Activated CD4-positive, alpha-beta memory T cell treated with anti-CD3 and anti-CD28 coated beads for 36 hours (primary cell): ENCODE measurements at regions of chr16 and their contacts with region 1.

Region 1: DNA sequence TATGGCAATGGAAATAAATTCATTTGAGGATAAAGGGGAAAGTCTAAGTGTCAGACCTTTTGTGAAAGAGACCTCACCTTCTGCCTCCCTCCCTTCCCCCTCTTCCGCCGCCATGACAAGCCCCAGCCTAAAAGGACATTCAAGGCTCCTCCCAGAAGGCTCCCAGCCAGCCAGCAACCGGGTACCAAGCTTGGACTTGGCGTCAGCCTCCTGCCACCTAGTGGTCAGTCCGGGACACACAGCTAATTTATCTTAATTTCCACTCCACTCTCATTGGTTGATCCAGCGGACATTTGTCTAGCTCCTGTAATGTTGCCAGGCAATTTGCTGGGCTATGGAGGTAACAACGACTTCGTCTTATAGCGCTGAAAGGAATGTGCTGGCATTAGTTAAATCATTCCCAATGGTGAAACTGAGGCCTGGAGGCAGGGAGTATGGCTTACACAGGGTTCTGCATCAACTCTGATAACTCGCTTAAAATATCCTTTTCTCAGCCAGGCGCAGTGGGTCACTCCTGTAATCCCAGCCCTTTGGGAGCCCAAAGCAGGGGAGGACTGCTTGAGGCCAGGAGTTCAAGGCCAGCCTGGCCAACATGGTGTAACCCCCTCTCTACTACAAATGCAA is 19.3 kb upstream of the CLEC3A start:
- DNase-seq: peak; percentile 87
- H3K4me3 Mint-ChIP-seq: no peak overlapping the region
- H3K27ac Mint-ChIP-seq: no peak overlapping the region
- H3K4me1 Mint-ChIP-seq: peaks cover 2% of the 10 kb centered on the region
- H3K27me3 Mint-ChIP-seq: peaks cover 11% of the 10 kb centered on the region

Region 2: DNA sequence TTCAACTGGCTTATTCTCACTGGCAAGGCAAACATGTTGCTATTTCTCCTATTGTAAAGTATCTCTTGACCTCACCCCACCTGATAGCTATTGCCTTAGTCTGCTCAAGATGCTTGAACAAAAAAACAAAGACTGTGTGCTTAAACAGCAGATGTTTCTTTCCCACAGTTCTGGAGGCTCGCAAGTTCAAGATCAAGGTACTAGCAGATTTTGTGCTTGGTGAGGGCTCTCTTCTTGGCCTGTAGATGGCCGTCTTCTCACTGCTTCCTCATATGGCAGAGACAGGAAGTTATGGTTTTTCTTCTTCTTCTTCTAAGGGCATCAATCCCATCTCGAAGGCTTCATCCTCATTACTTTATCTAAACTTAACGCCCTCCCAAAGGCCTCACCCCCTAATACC is 90.4 kb before region 1 on chr16:
- CTCF ChIA-PET with region 1: no interaction called
- POLR2A ChIA-PET with region 1: no interaction called
- intact Hi-C with region 1: no loop called
- DNase-seq: no peak
- H3K4me3 Mint-ChIP-seq: no peak overlapping the region
- H3K27ac Mint-ChIP-seq: no peak overlapping the region
- H3K4me1 Mint-ChIP-seq: no peaks in the 10 kb centered on the region
- H3K27me3 Mint-ChIP-seq: no peaks in the 10 kb centered on the region

Region 3: GRCh38 chr16:77951775-77952174 is 51.3 kb before region 1 on chr16:
- CTCF ChIA-PET with region 1: interaction called, 5 read pairs
- POLR2A ChIA-PET with region 1: no interaction called
- intact Hi-C with region 1: loop called (anchors 1 kb)
- DNase-seq: no peak
- H3K4me3 Mint-ChIP-seq: no peak overlapping the region
- H3K27ac Mint-ChIP-seq: no peak overlapping the region
- H3K4me1 Mint-ChIP-seq: no peaks in the 10 kb centered on the region
- H3K27me3 Mint-ChIP-seq: peaks cover 19% of the 10 kb centered on the region